Mammary epithelial cell (primary cell): ENCODE measurements at regions of chr5 and their contacts with region 1.

Region 1: GRCh38 chr5:1380011-1380817 is 35.3 kb upstream of the CLPTM1L start:
- DNase-seq: peak; percentile 3
- H3K4me3 ChIP-seq: no peak overlapping the region
- H3K27ac ChIP-seq: no peak overlapping the region
- H3K4me1 ChIP-seq: no peaks in the 10 kb centered on the region
- H3K27me3 ChIP-seq: no peaks in the 10 kb centered on the region
- CTCF ChIP-seq: peak; percentile 28 to 57

Region 2: GRCh38 chr5:1300581-1301083 is 79.6 kb before region 1 on chr5:
- CTCF ChIA-PET with region 1: no interaction called
- dilution Hi-C with region 1: loop called (anchors 5 kb)
- in situ Hi-C with region 1: no loop called
- intact Hi-C with region 1: no loop called
- DNase-seq: no peak
- H3K4me3 ChIP-seq: no peak overlapping the region
- H3K27ac ChIP-seq: no peak overlapping the region
- H3K4me1 ChIP-seq: no peaks in the 10 kb centered on the region
- H3K27me3 ChIP-seq: peaks cover 2% of the 10 kb centered on the region
- CTCF ChIP-seq: no peak

Region 3: DNA sequence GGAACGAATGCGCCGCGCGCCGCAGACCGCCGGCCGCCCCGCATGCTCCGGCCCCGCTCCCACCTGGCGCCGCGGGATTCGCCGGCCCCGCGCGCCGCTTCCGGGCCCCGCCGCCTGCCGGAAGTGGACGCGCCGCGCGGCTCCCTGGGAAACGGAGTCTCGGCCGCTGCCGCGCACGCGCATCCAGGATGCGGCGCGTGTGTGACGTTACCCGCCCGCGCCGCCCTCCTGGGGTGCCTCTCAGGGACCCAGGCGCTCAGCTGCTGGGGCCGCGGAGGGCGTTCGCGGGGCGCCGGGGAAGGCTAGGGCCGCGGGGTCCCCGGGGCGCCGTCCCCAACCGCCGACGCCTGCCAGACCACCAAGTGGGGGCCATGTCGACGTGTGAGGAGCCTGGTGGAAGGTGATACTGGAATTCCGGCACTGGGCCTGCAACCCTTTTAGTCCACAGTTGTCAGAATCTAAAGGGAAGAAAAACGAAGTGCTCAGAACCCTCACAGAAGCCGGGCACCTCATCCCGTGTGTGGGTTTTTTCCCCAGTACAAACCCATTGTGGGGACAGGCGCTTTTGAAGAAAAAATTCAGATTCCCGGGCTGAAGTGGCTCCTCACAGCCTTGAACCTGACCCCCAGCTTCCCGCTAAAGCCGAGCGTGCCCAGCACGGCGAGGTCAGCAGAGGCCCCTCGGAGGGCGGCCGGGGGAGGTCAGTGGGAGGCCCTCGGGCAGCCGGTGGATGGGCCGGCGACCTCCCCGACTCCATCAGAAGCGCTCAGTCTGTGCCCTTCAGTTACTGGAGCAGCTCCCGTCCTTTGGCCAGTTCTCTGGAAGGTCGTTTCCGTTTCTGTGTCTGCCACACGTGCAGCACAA is 35.0 kb before region 1 on chr5 and contains the start of gene CLPTM1L:
- CTCF ChIA-PET with region 1: no interaction called
- dilution Hi-C with region 1: no loop called
- in situ Hi-C with region 1: no loop called
- intact Hi-C with region 1: no loop called
- DNase-seq: peak; percentile 81
- H3K4me3 ChIP-seq: peak within 1 kb of the TSS; percentile 80 to 91 (median 87)
- H3K27ac ChIP-seq: peak within 1 kb of the TSS; percentile 78
- H3K4me1 ChIP-seq: peaks cover 18% of the 10 kb centered on the region
- H3K27me3 ChIP-seq: no peaks in the 10 kb centered on the region
- CTCF ChIP-seq: no peak
- total RNA-seq, gene CLPTM1L: 111 to 154 TPM

Region 4: GRCh38 chr5:1479581-1480188 is 99.5 kb after region 1 on chr5:
- CTCF ChIA-PET with region 1: interaction called, 18 read pairs
- dilution Hi-C with region 1: no loop called
- in situ Hi-C with region 1: no loop called
- intact Hi-C with region 1: no loop called
- DNase-seq: no peak
- H3K4me3 ChIP-seq: no peak overlapping the region
- H3K27ac ChIP-seq: no peak overlapping the region
- H3K4me1 ChIP-seq: no peaks in the 10 kb centered on the region
- H3K27me3 ChIP-seq: no peaks in the 10 kb centered on the region
- CTCF ChIP-seq: peak; percentile 18 to 52

Region 5: GRCh38 chr5:1494780-1495524 is 114.7 kb after region 1 on chr5:
- CTCF ChIA-PET with region 1: no interaction called
- dilution Hi-C with region 1: no loop called
- in situ Hi-C with region 1: no loop called
- intact Hi-C with region 1: no loop called
- DNase-seq: no peak
- H3K4me3 ChIP-seq: no peak overlapping the region
- H3K27ac ChIP-seq: no peak overlapping the region
- H3K4me1 ChIP-seq: no peaks in the 10 kb centered on the region
- H3K27me3 ChIP-seq: no peaks in the 10 kb centered on the region
- CTCF ChIP-seq: no peak